Heart right ventricle (tissue), 16 donors: ENCODE measurements at regions of chr3 and their contacts with region 1.

Region 1: DNA sequence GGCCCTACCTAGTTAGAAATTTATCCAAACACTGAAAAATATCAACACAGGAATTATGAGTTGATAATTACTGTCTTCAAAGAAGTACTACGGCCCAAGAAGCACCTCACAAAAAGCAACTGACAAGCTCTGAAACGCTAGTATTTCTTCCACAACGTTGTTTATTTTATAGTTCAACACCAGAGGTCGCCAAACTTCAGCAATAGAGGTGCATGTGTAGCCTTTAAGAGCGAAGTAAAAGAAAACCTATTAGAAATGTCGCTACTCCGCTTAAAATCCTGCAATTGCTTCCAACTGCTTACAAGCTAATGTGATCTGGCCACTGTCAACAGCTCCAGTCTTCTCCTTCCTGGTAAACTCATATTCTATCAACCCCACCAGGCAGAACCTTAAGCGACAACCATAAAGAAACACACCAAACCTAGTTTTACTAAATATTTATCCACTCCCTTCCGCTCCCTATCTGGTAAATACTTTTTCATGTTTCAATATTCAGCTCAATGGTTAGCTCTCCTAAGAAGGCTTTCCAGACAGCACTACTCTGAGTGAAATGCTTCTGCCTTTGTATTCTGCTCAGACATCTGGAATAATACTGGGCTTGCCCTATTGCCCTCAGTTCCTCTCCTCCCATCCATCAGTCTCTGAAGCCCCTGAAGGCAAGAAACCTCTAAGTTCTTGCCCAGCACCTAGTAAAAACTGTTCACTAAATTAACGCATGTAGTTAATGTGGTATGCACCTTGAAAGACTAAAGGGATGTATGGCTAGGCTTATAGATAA is 110.2 kb downstream of the NR1I2 start:
- DNase-seq: peak in 1 of 2 donors; percentile 60
- ATAC-seq: peak; percentile 61 to 89 (median 84)
- H3K4me3 ChIP-seq: peak overlapping the region in 1 of 10 donors; percentile 6
- H3K27ac ChIP-seq: peak overlapping the region in 1 of 10 donors; percentile 11
- H3K4me1 ChIP-seq: peaks cover 0 to 12% (median 9%) of the 10 kb centered on the region in 9 donors
- H3K27me3 ChIP-seq: no peaks in the 10 kb centered on the region
- CTCF ChIP-seq: peak; percentile 45 to 89 (median 75)

Region 2: DNA sequence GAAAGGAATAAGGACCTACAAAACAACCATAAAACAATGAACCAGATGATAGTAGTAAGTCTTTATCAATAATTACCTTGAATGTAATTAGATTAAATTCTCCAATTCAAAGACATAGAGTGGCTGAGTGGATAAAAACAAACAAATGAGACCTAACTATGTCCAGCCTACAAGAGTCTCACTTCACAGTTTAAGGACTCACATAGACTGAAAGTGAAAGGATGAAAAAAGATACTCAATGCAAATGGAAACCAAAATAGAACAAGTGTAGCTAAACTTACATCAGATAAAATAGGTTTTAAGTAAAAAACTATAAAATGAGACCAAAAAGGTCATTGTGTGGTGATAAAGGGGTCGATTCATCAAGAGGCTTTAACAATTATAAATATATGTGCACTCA is 132.2 kb before region 1 on chr3:
- intact Hi-C with region 1: no loop called
- DNase-seq: no peak
- ATAC-seq: no peak
- H3K4me3 ChIP-seq: no peak overlapping the region
- H3K27ac ChIP-seq: no peak overlapping the region
- H3K4me1 ChIP-seq: no peaks in the 10 kb centered on the region
- H3K27me3 ChIP-seq: no peaks in the 10 kb centered on the region
- CTCF ChIP-seq: no peak

Region 3: DNA sequence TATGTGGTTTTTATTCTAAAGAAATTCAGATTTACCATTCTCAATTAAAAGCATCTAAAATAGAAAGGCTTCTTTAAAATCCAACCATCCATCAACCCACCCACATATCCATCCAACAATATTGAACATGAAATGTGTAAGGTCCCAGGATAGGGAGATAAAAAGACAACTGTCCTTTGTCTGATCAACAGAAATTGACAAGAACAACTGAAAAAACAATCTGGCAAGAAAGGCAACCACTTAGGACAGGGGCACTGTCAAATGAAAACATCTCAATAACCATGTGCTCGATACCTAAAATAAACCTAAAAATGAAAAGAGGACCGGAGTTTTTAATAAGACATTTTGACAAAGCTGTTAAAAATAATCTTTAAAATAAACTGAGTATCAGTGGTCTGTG is 43.0 kb before region 1 on chr3:
- intact Hi-C with region 1: no loop called
- DNase-seq: no peak
- ATAC-seq: no peak
- H3K4me3 ChIP-seq: no peak overlapping the region
- H3K27ac ChIP-seq: no peak overlapping the region
- H3K4me1 ChIP-seq: peaks cover 0 to 14% (median 0%) of the 10 kb centered on the region in 9 donors
- H3K27me3 ChIP-seq: no peaks in the 10 kb centered on the region
- CTCF ChIP-seq: no peak

Region 4: GRCh38 chr3:120088622-120089021 is 196.5 kb after region 1 on chr3:
- intact Hi-C with region 1: loop called in 5 of 10 experiments (anchors 2 to 10 kb)
- DNase-seq: no peak
- ATAC-seq: no peak
- H3K4me3 ChIP-seq: peak overlapping the region in 1 of 10 donors; percentile 77
- H3K27ac ChIP-seq: no peak overlapping the region
- H3K4me1 ChIP-seq: peaks cover 0 to 62% (median 46%) of the 10 kb centered on the region in 9 donors
- H3K27me3 ChIP-seq: no peaks in the 10 kb centered on the region
- CTCF ChIP-seq: no peak

Region 5: DNA sequence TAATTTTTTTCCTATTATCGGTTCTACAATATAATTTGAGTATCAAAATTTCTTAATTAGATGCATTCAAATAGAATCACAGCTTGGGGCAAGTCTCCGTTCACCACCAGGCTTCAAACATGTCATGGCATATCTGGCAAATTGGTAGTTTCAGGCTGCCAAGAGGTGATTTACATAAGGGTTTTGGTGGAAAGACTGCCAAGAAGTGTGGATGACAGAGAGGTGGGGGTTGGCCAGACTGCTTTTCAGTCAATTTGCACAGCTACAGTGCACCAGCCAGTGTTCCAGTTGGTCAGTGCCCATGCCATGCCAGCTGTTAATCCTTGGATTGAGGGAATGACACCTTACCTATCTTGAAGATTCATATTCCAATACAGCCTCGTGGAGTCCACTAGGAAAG is 210.5 kb after region 1 on chr3:
- intact Hi-C with region 1: loop called in 5 of 10 experiments (anchors 5 to 10 kb)
- DNase-seq: peak in 1 of 2 donors; percentile 16
- ATAC-seq: peak; percentile 39 to 89 (median 59)
- H3K4me3 ChIP-seq: no peak overlapping the region
- H3K27ac ChIP-seq: peak overlapping the region in 4 of 10 donors; percentile 1 to 53 (median 16)
- H3K4me1 ChIP-seq: peaks cover 0 to 15% (median 2%) of the 10 kb centered on the region in 9 donors
- H3K27me3 ChIP-seq: no peaks in the 10 kb centered on the region
- CTCF ChIP-seq: no peak

Region 6: GRCh38 chr3:120182724-120183524 is 290.8 kb after region 1 on chr3:
- intact Hi-C with region 1: loop called in 9 of 10 experiments (anchors 1 to 10 kb)
- DNase-seq: peak in 1 of 2 donors; percentile 21
- ATAC-seq: peak in 3 of 8 donors; percentile 35 to 44 (median 42)
- H3K4me3 ChIP-seq: no peak overlapping the region
- H3K27ac ChIP-seq: no peak overlapping the region
- H3K4me1 ChIP-seq: peaks cover 0 to 3% (median 0%) of the 10 kb centered on the region in 9 donors
- H3K27me3 ChIP-seq: no peaks in the 10 kb centered on the region
- CTCF ChIP-seq: peak in 8 of 9 donors; percentile 6 to 60 (median 48)

Region 7: DNA sequence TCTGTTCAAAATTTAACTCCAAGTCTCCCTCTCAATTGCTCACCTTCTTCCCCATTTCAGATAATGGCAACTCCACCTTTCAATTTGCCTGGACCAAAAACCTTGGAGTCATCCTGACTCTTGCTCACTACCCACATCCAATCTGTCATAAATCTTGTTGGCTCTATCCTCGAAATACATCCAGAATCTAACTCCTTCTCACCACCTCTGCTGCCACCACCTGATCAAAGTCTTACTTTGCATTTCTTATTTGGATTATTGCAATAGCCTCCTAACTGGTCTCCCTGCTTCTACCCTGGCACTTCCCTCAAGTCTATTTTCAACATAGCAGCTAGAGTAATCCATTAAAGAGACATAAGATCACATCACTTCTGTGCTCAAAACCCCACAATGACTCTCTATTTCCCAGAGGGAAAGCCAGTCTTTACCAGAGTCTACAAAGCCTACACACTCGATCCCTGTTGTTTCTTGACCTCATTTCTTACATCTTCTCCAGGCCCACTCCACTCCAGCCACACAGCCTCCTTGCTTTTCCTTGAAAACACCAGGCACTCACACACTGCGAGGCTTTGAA is 306.3 kb after region 1 on chr3:
- intact Hi-C with region 1: loop called in 4 of 10 experiments (anchors 5 kb)
- DNase-seq: no peak
- ATAC-seq: peak in 3 of 8 donors; percentile 38 to 48 (median 39)
- H3K4me3 ChIP-seq: no peak overlapping the region
- H3K27ac ChIP-seq: no peak overlapping the region
- H3K4me1 ChIP-seq: peaks cover 0 to 14% (median 11%) of the 10 kb centered on the region in 9 donors
- H3K27me3 ChIP-seq: no peaks in the 10 kb centered on the region
- CTCF ChIP-seq: peak in 5 of 9 donors; percentile 11 to 49 (median 37)